ENCODE measurements at regions of chr1 and their contacts with region 1.

Region 1: GRCh38 chr1:153796791-153797659 is 21.8 kb downstream of the SLC27A3 start:
- DNase-seq: peak; percentile 71 to 85
- H3K4me3 ChIP-seq: no peak overlapping the region
- H3K27ac ChIP-seq: no peak overlapping the region
- H3K4me1 ChIP-seq: no peaks in the 10 kb centered on the region
- H3K27me3 ChIP-seq: no peaks in the 10 kb centered on the region
- CTCF ChIP-seq: peak; percentile 76 to 94 (median 90)
- POLR2A ChIP-seq: no peak

Region 2: DNA sequence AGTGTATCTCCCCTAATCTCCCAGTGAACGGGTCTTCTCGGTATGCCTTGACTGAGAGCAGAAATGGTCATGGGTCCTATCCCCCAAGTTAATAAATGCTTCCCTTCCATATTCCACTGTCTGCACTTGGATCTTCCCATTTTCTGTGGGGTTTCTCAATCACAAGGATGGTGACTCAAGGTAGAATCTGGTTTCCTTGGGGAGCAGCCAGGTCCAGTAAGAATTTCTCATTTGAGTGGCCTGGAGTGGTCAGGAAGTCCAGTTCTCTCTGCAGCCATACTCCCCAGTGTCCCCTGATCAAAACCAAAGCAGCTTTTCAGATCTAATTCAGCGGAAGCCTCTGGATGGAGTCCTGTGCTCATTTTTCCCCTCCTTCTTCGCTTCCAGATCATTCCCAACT is 36.6 kb before region 1 on chr1:
- intact Hi-C with region 1: no loop called
- DNase-seq: no peak
- H3K4me3 ChIP-seq: no peak overlapping the region
- H3K27ac ChIP-seq: no peak overlapping the region
- H3K4me1 ChIP-seq: no peaks in the 10 kb centered on the region
- H3K27me3 ChIP-seq: no peaks in the 10 kb centered on the region
- CTCF ChIP-seq: no peak
- POLR2A ChIP-seq: no peak

Region 3: DNA sequence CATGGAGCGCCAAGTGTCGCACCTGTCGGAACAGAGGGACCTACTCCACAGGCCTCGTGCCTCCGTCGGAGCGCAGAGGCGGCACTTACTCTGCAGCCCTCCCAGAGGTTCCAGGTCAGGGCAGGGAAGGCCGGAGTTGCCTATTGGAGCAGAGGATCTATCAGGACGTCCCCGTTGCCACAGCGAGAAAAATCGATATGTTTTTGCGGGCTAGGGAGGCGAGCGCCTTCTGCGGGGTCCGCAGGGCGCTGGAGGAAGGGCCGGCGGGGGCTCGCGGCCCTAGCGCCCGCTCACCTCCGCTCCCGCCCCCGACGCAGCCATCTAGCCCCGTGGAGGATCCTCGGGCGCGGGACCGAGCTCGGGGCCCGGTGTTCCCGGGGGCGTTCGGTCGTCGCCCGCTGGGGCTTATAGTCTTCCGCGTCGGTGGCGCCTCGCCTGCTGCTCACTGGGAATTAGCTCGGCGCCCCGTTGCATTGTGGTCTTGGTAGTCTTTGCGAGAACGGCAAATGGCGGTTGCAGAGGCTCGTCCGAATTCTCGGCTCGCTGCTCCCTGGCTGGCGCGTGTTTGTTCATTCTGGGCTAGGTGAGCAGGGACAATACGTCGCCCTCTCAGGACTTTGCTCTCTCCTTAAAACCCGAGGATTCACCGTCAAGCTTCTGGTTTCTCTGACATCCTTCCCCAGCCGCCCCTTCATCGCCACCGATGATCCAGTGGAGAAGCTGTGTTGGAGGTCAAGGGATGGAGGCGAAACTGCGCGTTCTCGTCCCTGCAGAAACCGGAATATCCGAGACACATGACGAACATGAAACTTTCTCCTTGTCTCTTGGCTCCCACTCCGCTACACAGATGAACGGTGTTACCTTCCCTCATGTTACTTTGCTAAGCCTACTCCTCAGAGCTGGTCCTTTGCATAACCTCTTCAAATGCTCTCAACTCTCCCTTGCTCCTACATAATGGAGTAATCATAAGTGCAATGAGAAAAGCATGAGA is 180.5 kb after region 1 on chr1 and contains the start of gene JTB:
- intact Hi-C with region 1: loop called (anchors 10 kb)
- DNase-seq: peak; percentile 83 to 85
- H3K4me3 ChIP-seq: peak within 1 kb of the TSS; percentile 73 to 83 (median 81)
- H3K27ac ChIP-seq: peak within 1 kb of the TSS; percentile 91 to 92
- H3K4me1 ChIP-seq: peaks cover 0 to 5% of the 10 kb centered on the region in 2 donors
- H3K27me3 ChIP-seq: no peaks in the 10 kb centered on the region
- CTCF ChIP-seq: no peak
- POLR2A ChIP-seq: peak; percentile 89
- total RNA-seq, gene JTB: 237 to 315 (median 268) TPM

Region 4: GRCh38 chr1:154595621-154596020 is 798.6 kb after region 1 on chr1:
- intact Hi-C with region 1: no loop called
- DNase-seq: no peak
- H3K4me3 ChIP-seq: no peak overlapping the region
- H3K27ac ChIP-seq: no peak overlapping the region
- H3K4me1 ChIP-seq: peaks cover 0 to 3% of the 10 kb centered on the region in 2 donors
- H3K27me3 ChIP-seq: no peaks in the 10 kb centered on the region
- CTCF ChIP-seq: no peak
- POLR2A ChIP-seq: no peak

Region 5: DNA sequence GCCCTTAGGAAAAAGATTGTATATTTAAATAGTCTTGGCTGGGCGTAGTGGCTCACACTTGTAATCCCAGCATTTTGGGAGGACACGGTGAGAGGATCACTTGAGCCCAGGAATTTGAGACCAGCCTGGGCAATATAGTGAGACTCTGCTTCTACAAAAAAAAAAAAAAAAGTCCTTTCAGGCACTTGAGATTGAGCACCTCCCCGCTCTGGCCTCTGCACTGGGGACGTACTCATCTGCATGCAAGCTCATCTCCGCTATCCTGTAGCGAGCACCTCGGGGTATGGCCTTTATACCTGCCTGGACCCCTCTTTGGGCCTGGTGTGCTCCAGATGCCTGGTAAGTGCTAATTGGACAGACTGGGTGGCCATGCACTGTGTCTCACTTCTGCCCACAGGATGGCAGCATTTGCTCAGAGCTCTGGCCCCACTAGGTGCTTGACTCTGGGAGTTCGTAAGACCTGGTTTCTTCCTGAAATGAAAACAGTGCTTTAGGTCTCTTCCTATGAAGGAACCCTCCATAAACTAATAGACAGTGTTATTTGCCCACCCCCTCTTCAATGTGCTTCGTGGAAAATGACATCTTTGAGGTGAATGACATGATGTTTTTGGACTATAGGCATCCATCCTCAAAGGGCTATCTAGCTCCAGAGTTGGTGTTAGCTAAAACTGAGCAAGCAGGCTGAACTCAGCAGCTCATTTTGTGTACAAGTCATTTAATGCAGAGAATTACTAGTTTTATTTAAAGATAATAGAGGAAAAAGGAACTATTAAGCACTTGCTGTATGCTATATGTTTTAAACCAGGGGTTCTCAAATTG is 872.6 kb after region 1 on chr1:
- intact Hi-C with region 1: no loop called
- DNase-seq: peak; percentile 53 to 61
- H3K4me3 ChIP-seq: no peak overlapping the region
- H3K27ac ChIP-seq: no peak overlapping the region
- H3K4me1 ChIP-seq: no peaks in the 10 kb centered on the region
- H3K27me3 ChIP-seq: no peaks in the 10 kb centered on the region
- CTCF ChIP-seq: peak; percentile 30 to 70 (median 68)
- POLR2A ChIP-seq: no peak

Measured in breast epithelium (tissue), 4 donors.